Activated CD4-positive, alpha-beta T cell treated with anti-CD3 and anti-CD28 coated beads for 36 hours (primary cell): ENCODE measurements at regions of chr16 and their contacts with region 1.

Region 1: GRCh38 chr16:81366316-81366932 is 51.7 kb downstream of the GAN start:
- DNase-seq: no peak
- ATAC-seq: peak; percentile 71
- H3K4me3 Mint-ChIP-seq: no peak overlapping the region
- H3K27ac Mint-ChIP-seq: no peak overlapping the region
- H3K4me1 Mint-ChIP-seq: no peaks in the 10 kb centered on the region
- H3K27me3 Mint-ChIP-seq: no peaks in the 10 kb centered on the region

Region 2: DNA sequence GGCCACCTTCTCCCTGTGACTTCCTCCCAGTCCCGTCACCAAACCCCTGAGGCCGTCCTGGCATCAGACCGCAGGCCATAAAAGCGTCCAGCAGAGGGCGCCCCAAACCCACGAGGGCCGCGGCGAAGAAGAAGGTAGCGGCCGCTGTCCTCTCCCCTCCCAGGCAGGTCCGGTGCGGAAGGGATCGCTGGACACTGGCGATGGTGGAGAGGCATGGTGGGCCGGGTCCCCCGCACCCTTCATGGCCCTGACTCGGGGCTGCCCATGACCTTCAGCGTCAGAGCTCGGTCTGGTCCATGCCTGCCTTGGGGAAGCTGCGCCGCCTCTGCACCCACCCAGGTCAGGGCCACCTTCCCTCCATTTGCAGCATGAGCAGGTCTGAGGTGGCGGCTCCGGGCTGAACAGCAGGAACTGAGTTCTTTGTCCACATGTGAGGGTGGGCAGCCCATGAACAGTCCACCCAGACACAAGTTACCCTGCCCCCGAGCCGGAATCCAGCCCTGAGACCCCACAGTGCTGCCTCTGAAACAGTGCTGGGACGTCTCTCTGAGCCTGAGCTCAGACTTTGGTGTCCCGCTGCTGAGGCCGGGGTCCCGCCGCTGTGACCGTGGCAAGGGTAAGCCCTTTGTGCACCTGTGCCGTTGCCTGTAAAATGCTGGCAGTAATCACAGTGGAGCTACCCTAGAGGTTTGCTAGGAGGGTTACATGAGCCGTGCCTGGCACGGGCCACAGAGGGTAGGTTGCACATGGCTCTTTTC is 37.4 kb after region 1 on chr16:
- CTCF ChIA-PET with region 1: interaction called, 4 read pairs
- POLR2A ChIA-PET with region 1: no interaction called
- intact Hi-C with region 1: loop called in 1 of 2 experiments (anchors 2 kb)
- DNase-seq: peak; percentile 92
- ATAC-seq: peak; percentile 98
- H3K4me3 Mint-ChIP-seq: no peak overlapping the region
- H3K27ac Mint-ChIP-seq: no peak overlapping the region
- H3K4me1 Mint-ChIP-seq: no peaks in the 10 kb centered on the region
- H3K27me3 Mint-ChIP-seq: peaks cover 1% of the 10 kb centered on the region

Region 3: GRCh38 chr16:81723098-81723723 is 356.8 kb after region 1 on chr16:
- CTCF ChIA-PET with region 1: interaction called, 7 read pairs
- POLR2A ChIA-PET with region 1: no interaction called
- intact Hi-C with region 1: loop called (anchors 1 kb)
- DNase-seq: peak; percentile 47
- ATAC-seq: peak; percentile 79
- H3K4me3 Mint-ChIP-seq: no peak overlapping the region
- H3K27ac Mint-ChIP-seq: no peak overlapping the region
- H3K4me1 Mint-ChIP-seq: peaks cover 13% of the 10 kb centered on the region
- H3K27me3 Mint-ChIP-seq: no peaks in the 10 kb centered on the region

Region 4: GRCh38 chr16:81737885-81738786 is 371.7 kb after region 1 on chr16:
- CTCF ChIA-PET with region 1: interaction called, 11 read pairs
- POLR2A ChIA-PET with region 1: no interaction called
- intact Hi-C with region 1: loop called (anchors 1 kb)
- DNase-seq: peak; percentile 93
- ATAC-seq: peak; percentile 98
- H3K4me3 Mint-ChIP-seq: peak overlapping the region; percentile 55
- H3K27ac Mint-ChIP-seq: peak overlapping the region; percentile 51
- H3K4me1 Mint-ChIP-seq: no peaks in the 10 kb centered on the region
- H3K27me3 Mint-ChIP-seq: no peaks in the 10 kb centered on the region

Region 5: GRCh38 chr16:81885976-81886586 is 519.7 kb after region 1 on chr16:
- CTCF ChIA-PET with region 1: interaction called, 3 read pairs
- POLR2A ChIA-PET with region 1: no interaction called
- intact Hi-C with region 1: loop called in 1 of 2 experiments (anchors 5 kb)
- DNase-seq: peak; percentile 42
- ATAC-seq: peak; percentile 71
- H3K4me3 Mint-ChIP-seq: no peak overlapping the region
- H3K27ac Mint-ChIP-seq: no peak overlapping the region
- H3K4me1 Mint-ChIP-seq: no peaks in the 10 kb centered on the region
- H3K27me3 Mint-ChIP-seq: no peaks in the 10 kb centered on the region